Pancreas (tissue), 10 donors: ENCODE measurements at regions of chr2 and their contacts with region 1.

Region 1: GRCh38 chr2:191051825-191052778 is 38.1 kb upstream of the STAT1 start:
- DNase-seq: no peak
- ATAC-seq: peak; percentile 50 to 84 (median 71)
- H3K4me3 ChIP-seq: no peak overlapping the region
- H3K27ac ChIP-seq: no peak overlapping the region
- H3K4me1 ChIP-seq: peaks cover 0 to 6% (median 0%) of the 10 kb centered on the region in 3 donors
- H3K27me3 ChIP-seq: no peaks in the 10 kb centered on the region
- CTCF ChIP-seq: peak in 3 of 4 donors; percentile 31 to 48 (median 46)

Region 2: GRCh38 chr2:190853531-190854383 is 198.3 kb before region 1 on chr2:
- intact Hi-C with region 1: no loop called
- DNase-seq: no peak
- ATAC-seq: peak in 3 of 4 donors; percentile 21 to 49 (median 45)
- H3K4me3 ChIP-seq: no peak overlapping the region
- H3K27ac ChIP-seq: no peak overlapping the region
- H3K4me1 ChIP-seq: peaks cover 0 to 8% (median 7%) of the 10 kb centered on the region in 3 donors
- H3K27me3 ChIP-seq: no peaks in the 10 kb centered on the region
- CTCF ChIP-seq: no peak

Region 3: DNA sequence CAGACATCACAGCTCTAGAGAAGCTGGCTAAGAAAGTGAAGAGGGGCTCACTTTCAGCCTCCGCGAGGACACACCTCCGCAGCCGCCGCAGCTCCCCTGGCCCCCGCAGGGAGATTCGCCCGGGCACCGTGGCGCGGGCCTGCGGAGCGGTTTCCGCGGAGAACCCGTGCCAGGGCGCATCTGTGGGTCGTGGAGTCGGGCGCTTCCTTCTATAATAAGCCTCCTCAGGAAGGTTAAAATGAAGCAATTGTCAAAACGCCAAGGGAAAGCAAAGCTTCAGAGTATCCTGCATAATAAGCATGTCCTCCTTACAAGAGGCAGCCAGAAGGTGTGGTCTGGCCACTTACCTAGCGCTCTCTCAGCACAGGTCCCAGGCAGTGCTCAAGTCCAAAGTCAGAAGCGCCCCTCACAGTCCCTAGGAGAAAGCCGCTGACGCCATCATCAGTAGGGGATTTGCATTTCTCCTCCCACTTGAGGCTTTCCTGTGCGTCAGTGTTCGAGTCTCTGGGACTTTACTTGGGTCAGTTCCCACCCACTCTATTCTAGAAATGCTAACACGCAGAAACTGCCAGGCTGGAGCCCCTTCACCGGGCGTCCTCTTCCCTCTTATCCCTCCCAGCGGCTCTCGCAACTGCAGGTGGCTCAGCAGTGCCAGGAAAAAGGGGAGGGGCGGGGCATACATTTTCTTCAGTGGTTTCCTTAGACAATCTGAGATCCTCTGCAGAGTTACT is 98.7 kb after region 1 on chr2 and contains the start of gene STAT4:
- intact Hi-C with region 1: loop called in 1 of 3 experiments (anchors 10 kb)
- DNase-seq: peak; percentile 24 to 69 (median 34)
- ATAC-seq: peak; percentile 64 to 89 (median 85)
- H3K4me3 ChIP-seq: peak within 1 kb of the TSS; percentile 9 to 57 (median 32)
- H3K27ac ChIP-seq: peak within 1 kb of the TSS in 2 of 4 donors; percentile 24 to 45
- H3K4me1 ChIP-seq: peaks cover 0 to 3% (median 0%) of the 10 kb centered on the region in 3 donors
- H3K27me3 ChIP-seq: no peaks in the 10 kb centered on the region
- CTCF ChIP-seq: no peak
- total RNA-seq, gene STAT4: 0.60 to 2.5 (median 1.4) TPM

Region 4: GRCh38 chr2:191274413-191274815 is 222.3 kb after region 1 on chr2:
- intact Hi-C with region 1: no loop called
- DNase-seq: no peak
- ATAC-seq: no peak
- H3K4me3 ChIP-seq: no peak overlapping the region
- H3K27ac ChIP-seq: no peak overlapping the region
- H3K4me1 ChIP-seq: peaks cover 14 to 17% (median 14%) of the 10 kb centered on the region in 3 donors
- H3K27me3 ChIP-seq: no peaks in the 10 kb centered on the region
- CTCF ChIP-seq: no peak

Region 5: DNA sequence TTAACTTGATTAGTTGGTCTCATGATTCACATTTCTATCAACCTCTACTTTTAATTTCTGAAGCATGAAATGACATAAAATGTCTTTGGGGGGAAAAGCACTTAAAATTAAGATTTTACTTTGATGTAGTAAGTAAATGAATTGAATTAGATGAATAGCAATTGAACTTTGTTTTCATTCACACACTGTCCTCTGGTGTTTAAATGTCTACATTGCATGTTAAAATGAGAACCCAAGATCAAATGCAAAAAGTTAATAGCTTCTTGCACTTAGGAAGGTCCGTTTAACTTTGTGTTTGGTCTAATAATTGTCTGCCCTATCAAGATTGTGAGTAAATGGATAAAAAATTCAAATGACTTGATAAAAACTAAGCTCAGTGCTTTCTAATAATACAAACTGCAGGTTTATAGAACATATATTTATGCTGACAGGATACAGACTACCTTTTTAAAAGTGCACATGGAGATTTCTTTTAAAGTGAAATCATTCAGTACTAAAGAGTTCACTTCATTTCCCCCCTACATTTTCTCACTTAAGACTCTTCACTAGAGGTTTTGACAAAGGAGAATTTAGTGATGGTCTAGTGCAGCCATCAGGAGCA is 469.6 kb after region 1 on chr2:
- intact Hi-C with region 1: loop called in 1 of 3 experiments (anchors 10 kb)
- DNase-seq: no peak
- ATAC-seq: peak in 3 of 4 donors; percentile 67 to 76 (median 72)
- H3K4me3 ChIP-seq: no peak overlapping the region
- H3K27ac ChIP-seq: no peak overlapping the region
- H3K4me1 ChIP-seq: no peaks in the 10 kb centered on the region
- H3K27me3 ChIP-seq: no peaks in the 10 kb centered on the region
- CTCF ChIP-seq: peak; percentile 14 to 69 (median 56)